Calu3 (cell line): ENCODE measurements at regions of chr5 and their contacts with region 1.

Region 1: DNA sequence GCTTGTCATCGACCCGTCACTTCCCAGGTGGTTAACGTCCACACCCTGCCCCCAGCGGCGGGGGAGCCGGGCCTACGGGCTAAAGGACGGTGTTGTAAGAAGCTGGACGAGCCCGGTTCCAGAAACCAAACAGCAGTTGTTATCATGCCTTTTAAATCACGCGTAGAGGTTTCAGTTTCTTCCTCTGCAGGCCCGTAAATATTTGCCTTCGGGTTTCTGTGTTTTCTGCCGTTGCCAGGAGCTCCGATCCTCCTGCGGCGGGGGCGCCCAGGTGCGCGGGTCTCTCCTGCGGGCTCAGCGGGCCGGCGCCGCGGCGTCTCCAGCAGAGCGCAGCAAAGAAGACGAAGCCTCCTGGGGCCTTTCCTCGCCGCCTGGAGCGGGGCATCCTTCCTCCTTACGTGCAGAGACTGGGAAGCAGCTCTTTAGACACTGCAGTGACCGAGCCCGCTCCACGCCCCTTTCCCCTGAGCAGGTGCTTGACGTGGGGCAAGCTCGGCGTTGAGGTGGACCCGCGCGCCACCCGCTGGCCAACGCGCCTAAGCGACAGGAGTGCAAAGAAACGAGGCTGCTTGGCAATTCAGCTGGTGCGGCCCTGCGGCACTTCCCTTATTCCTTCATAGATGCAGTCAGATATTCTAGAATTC is 21.8 kb upstream of the TTC1 start:
- DNase-seq: peak; percentile 95
- H3K4me3 Mint-ChIP-seq: peak overlapping the region; percentile 77
- H3K27ac Mint-ChIP-seq: no peak overlapping the region
- H3K4me1 Mint-ChIP-seq: peaks cover 4% of the 10 kb centered on the region
- H3K27me3 Mint-ChIP-seq: peaks cover 11% of the 10 kb centered on the region
- CTCF ChIP-seq: peak; percentile 83

Region 2: GRCh38 chr5:159156426-159157238 is 830.5 kb before region 1 on chr5:
- CTCF ChIA-PET with region 1: interaction called, 10 read pairs
- intact Hi-C with region 1: loop called (anchors 10 kb)
- DNase-seq: peak; percentile 58
- H3K4me3 Mint-ChIP-seq: no peak overlapping the region
- H3K27ac Mint-ChIP-seq: no peak overlapping the region
- H3K4me1 Mint-ChIP-seq: peaks cover 8% of the 10 kb centered on the region
- H3K27me3 Mint-ChIP-seq: no peaks in the 10 kb centered on the region
- CTCF ChIP-seq: peak; percentile 78

Region 3: DNA sequence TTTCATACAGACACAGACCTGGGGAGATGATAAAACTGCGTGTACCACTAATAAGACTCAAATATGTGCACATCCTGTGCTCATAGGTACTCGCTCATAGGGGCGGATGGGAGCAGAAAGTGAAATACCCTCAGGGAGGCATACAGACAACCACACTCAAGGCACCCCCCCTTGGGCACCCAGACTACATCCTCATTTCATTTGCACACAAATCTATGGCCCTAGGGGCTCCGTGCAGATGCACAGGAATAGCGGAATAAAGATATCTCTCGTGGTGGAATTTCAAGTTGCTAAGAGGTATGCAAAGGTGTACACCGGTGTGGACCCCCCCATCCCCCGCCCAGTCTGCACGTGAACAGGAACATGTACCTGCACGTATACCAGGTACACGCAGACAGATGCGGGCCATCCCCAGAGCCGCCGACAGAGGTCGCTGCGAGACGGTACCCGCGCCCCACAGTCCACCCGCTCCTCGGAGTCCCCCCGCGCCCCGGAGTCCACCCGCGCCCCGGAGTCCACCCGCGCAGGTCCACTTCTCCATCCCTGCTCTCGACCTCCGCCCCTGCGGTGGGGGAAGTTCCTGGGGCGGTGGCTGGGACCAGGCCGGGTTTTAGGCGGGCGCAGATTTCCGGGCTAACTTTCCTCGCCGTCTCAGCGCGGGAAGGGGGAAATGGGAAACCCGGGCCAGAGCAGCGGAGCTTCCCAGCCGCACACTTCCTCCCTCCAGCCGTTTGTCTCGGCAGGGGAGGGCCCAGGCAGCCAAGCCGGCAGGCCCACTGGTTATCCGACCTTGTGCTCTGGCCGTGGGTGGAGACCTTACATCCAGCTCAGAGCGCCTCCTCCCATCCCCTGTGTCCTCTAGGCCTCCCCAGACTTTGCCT is 655.8 kb before region 1 on chr5:
- CTCF ChIA-PET with region 1: interaction called, 5 read pairs
- intact Hi-C with region 1: loop called (anchors 5 kb)
- DNase-seq: peak; percentile 77
- H3K4me3 Mint-ChIP-seq: peak overlapping the region; percentile 76
- H3K27ac Mint-ChIP-seq: no peak overlapping the region
- H3K4me1 Mint-ChIP-seq: peaks cover 11% of the 10 kb centered on the region
- H3K27me3 Mint-ChIP-seq: peaks cover 100% of the 10 kb centered on the region
- CTCF ChIP-seq: peak; percentile 94

Region 4: GRCh38 chr5:159515909-159516415 is 471.2 kb before region 1 on chr5:
- CTCF ChIA-PET with region 1: interaction called, 8 read pairs
- intact Hi-C with region 1: loop called (anchors 1 kb)
- DNase-seq: peak; percentile 89
- H3K4me3 Mint-ChIP-seq: no peak overlapping the region
- H3K27ac Mint-ChIP-seq: no peak overlapping the region
- H3K4me1 Mint-ChIP-seq: peaks cover 42% of the 10 kb centered on the region
- H3K27me3 Mint-ChIP-seq: no peaks in the 10 kb centered on the region
- CTCF ChIP-seq: peak; percentile 92

Region 5: DNA sequence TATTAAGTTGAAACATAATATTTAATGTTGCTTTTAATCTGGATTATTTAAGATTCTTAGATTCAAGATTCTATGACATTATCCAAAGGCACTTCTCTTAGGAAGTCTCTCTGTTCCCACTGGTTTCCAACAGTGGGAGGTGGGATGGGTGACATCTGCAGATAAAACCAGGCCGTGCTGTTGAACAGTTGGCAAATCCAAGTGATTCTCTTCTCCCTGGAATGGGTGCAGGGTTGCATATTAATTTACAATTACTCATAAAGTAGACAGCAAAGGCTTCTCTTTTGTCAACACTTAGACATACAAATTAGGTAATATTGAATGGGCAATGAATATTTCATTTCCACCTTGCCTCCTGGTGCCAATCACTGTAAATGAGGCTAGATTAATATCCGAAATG is 423.1 kb before region 1 on chr5:
- CTCF ChIA-PET with region 1: no interaction called
- intact Hi-C with region 1: no loop called
- DNase-seq: no peak
- H3K4me3 Mint-ChIP-seq: no peak overlapping the region
- H3K27ac Mint-ChIP-seq: no peak overlapping the region
- H3K4me1 Mint-ChIP-seq: no peaks in the 10 kb centered on the region
- H3K27me3 Mint-ChIP-seq: peaks cover 13% of the 10 kb centered on the region
- CTCF ChIP-seq: no peak

Region 6: DNA sequence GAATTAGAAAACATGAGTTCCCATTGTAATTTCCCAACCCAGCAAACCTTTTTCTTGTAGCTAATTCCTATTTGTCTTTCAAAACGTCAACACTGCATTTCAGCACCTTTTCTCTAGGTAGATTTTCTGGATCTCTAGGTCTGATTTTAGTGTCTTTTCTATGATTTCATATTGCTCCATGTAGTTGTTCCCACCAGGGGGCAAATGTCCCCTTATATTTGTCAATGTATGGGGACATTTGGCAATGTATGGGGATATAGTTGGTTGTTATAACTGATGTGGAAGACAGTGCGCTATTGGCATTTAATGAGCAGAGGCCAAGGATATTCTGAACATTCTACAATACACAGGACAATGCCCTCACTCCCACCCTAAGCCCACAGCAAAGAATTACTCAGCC is 344.8 kb before region 1 on chr5:
- CTCF ChIA-PET with region 1: no interaction called
- intact Hi-C with region 1: loop called (anchors 2 kb)
- DNase-seq: no peak
- H3K4me3 Mint-ChIP-seq: no peak overlapping the region
- H3K27ac Mint-ChIP-seq: no peak overlapping the region
- H3K4me1 Mint-ChIP-seq: no peaks in the 10 kb centered on the region
- H3K27me3 Mint-ChIP-seq: no peaks in the 10 kb centered on the region
- CTCF ChIP-seq: no peak

Region 7: DNA sequence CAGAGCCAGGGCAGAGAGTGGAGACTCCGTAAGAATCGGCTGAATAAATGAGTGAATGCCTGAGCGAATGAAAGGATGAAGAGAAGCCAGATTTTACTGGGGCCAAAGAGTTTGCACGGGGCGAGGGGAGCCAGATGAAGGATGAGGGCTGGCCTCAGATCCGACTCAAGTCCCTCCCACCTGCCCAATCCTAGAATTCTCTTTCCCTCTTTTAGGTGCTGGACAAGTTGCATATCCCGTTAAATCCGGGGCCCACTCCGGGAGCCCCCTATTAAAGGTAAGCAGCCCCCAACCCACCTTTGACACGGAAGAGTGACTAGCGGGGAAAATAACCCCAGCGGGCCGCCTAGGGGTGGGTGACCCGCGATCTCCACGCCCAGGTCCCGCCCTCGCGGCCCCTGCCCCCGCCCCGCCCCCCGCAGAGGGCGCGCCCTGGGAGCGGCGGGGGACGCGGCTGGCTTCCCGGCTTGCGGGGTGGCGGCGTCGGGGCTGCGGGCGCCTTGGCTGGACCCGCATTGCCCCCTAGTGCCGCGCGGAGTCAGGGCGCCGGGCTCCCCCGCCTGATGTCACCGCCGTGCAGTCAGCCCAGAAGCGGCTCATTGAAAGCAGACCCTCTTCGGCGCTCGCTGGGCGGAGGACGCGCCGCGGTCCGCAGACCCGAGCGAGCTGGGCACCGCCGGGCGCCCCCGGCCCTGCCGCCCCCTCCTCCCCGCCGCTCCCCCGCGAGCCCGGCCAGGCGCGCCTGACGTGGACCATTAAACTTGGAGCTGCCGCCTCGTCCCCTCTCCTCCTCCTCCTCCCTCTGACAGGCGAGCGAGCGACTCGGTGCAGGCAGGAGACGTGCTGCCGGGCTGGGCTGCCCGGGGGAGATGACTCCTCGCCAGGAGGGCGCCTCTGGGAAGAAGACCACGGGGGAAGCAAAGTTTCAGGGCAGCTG is 71.0 kb before region 1 on chr5 and contains the start of gene ADRA1B:
- CTCF ChIA-PET with region 1: interaction called, 29 read pairs
- intact Hi-C with region 1: loop called (anchors 2 kb)
- DNase-seq: peak; percentile 91
- H3K4me3 Mint-ChIP-seq: peak within 1 kb of the TSS; percentile 67
- H3K27ac Mint-ChIP-seq: peak within 1 kb of the TSS; percentile 84
- H3K4me1 Mint-ChIP-seq: peaks cover 87% of the 10 kb centered on the region
- H3K27me3 Mint-ChIP-seq: no peaks in the 10 kb centered on the region
- CTCF ChIP-seq: peak; percentile 79
- total RNA-seq, gene ADRA1B: 3.7 and 10.9 TPM in 2 replicates